ENCODE measurements at regions of chr5 and their contacts with region 1.

Region 1: GRCh38 chr5:141245250-141245717 is at the start of gene PCDHB15:
- DNase-seq: peak; percentile 85
- ATAC-seq: peak; percentile 87
- H3K4me3 Mint-ChIP-seq: peak within 1 kb of the TSS; percentile 85
- H3K27ac Mint-ChIP-seq: peak within 1 kb of the TSS; percentile 93
- H3K4me1 Mint-ChIP-seq: peaks cover 18% of the 10 kb centered on the region
- H3K27me3 Mint-ChIP-seq: no peaks in the 10 kb centered on the region
- CTCF ChIP-seq: peak; percentile 70
- total RNA-seq, gene PCDHB15: 7.7 to 8.7 TPM (median 8.4 TPM) in 3 replicates

Region 2: DNA sequence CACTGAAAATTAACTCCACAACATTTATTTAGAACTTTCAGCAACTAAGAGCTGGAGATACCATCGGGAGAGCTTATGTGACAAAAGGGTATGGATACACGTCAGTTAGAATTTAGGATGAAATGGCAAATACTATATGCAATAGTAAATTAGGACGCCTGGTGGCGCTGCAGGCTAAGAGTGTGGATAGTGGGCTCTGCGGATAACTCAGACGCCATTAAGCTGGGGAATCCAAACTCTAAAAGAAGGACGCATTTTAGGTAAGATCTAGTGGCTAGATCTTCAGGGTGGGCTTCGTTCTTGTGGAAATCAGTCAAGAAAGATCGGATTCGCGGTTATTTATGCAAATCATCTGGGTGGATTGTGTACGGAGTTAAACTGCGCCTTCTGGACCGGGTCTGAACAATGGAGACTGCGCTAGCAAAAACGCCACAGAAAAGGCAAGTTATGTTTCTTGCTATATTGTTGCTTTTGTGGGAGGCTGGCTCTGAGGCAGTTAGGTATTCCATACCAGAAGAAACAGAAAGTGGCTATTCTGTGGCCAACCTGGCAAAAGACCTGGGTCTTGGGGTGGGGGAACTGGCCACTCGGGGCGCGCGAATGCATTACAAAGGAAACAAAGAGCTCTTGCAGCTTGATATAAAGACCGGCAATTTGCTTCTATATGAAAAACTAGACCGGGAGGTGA is 110.1 kb before region 1 on chr5 and contains the start of gene PCDHB5:
- CTCF ChIA-PET with region 1: interaction called, 14 read pairs
- POLR2A ChIA-PET with region 1: no interaction called
- DNase-seq: peak; percentile 72
- ATAC-seq: peak; percentile 89
- H3K4me3 Mint-ChIP-seq: peak within 1 kb of the TSS; percentile 74
- H3K27ac Mint-ChIP-seq: peak within 1 kb of the TSS; percentile 64; the same call in 1 of the 2 replicates
- H3K4me1 Mint-ChIP-seq: peaks cover 4% of the 10 kb centered on the region; the same call in 1 of the 2 replicates
- H3K27me3 Mint-ChIP-seq: no peaks in the 10 kb centered on the region
- CTCF ChIP-seq: peak; percentile 72
- total RNA-seq, gene PCDHB5: 6.8 to 12.5 TPM (median 8.5 TPM) in 3 replicates

Region 3: GRCh38 chr5:141199359-141200235 is 45.7 kb before region 1 on chr5 and contains the start of gene PCDHB11:
- CTCF ChIA-PET with region 1: interaction called, 20 read pairs
- POLR2A ChIA-PET with region 1: no interaction called
- DNase-seq: no peak
- ATAC-seq: peak; percentile 67
- H3K4me3 Mint-ChIP-seq: peak within 1 kb of the TSS; percentile 24
- H3K27ac Mint-ChIP-seq: no peak within 1 kb of the TSS
- H3K4me1 Mint-ChIP-seq: peaks cover 7% of the 10 kb centered on the region
- H3K27me3 Mint-ChIP-seq: no peaks in the 10 kb centered on the region; the same call in 1 of the 2 replicates
- CTCF ChIP-seq: peak; percentile 32; the same call in 1 of the 2 replicates
- total RNA-seq, gene PCDHB11: 0.61 to 1.2 TPM (median 0.92 TPM) in 3 replicates

Region 4: GRCh38 chr5:141320225-141321169 is 75.2 kb after region 1 on chr5 and contains the start of gene TAF7:
- CTCF ChIA-PET with region 1: interaction called, 37 read pairs
- POLR2A ChIA-PET with region 1: interaction called, 5 read pairs
- DNase-seq: peak; percentile 95
- ATAC-seq: peak; percentile 94
- H3K4me3 Mint-ChIP-seq: peak within 1 kb of the TSS; percentile 99
- H3K27ac Mint-ChIP-seq: peak within 1 kb of the TSS; percentile 99
- H3K4me1 Mint-ChIP-seq: peaks cover 24% of the 10 kb centered on the region
- H3K27me3 Mint-ChIP-seq: peaks cover 24% of the 10 kb centered on the region
- CTCF ChIP-seq: peak; percentile 85
- total RNA-seq, gene TAF7: 87.8 to 96.2 TPM (median 90.1 TPM) in 3 replicates

Region 5: GRCh38 chr5:141369994-141370848 is 124.9 kb after region 1 on chr5 and contains the start of gene PCDHGB3:
- CTCF ChIA-PET with region 1: interaction called, 18 read pairs
- POLR2A ChIA-PET with region 1: no interaction called
- DNase-seq: peak; percentile 56
- ATAC-seq: peak; percentile 95
- H3K4me3 Mint-ChIP-seq: peak within 1 kb of the TSS; percentile 61
- H3K27ac Mint-ChIP-seq: peak within 1 kb of the TSS; percentile 91
- H3K4me1 Mint-ChIP-seq: peaks cover 5% of the 10 kb centered on the region
- H3K27me3 Mint-ChIP-seq: peaks cover 8% of the 10 kb centered on the region
- CTCF ChIP-seq: no peak
- total RNA-seq, gene PCDHGB3: 3.3 to 4.2 TPM (median 3.5 TPM) in 3 replicates

Region 6: DNA sequence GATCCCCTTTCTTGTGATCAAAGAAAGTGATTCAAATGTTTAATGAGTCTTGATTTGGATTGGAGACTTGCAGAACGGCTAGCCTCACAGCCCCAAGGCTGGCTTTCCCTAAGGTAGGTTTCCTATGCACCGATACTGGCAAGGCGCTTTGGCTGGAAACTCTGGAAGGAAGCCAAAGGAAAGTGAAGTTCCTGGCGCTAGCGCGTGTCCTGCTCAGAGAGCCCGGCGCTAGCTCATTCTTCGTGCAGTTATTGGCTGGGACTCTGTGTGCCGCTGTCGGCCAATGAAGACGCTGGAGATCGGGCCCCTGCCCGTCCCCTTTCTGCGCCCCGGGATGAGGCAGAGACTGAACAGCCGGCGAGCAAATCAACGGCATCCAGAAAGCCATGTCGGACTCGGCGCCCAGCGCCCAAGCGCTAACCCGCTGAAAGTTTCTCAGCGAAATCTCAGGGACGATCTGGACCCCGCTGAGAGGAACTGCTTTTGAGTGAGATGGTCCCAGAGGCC is 230.4 kb after region 1 on chr5 and contains the start of gene PCDHGC3:
- CTCF ChIA-PET with region 1: interaction called, 12 read pairs
- POLR2A ChIA-PET with region 1: no interaction called
- DNase-seq: peak; percentile 92
- ATAC-seq: peak; percentile 96
- H3K4me3 Mint-ChIP-seq: peak within 1 kb of the TSS; percentile 92
- H3K27ac Mint-ChIP-seq: peak within 1 kb of the TSS; percentile 93
- H3K4me1 Mint-ChIP-seq: peaks cover 35% of the 10 kb centered on the region
- H3K27me3 Mint-ChIP-seq: peaks cover 28% of the 10 kb centered on the region
- CTCF ChIP-seq: no peak
- total RNA-seq, gene PCDHGC3: 28.1 to 29.4 TPM (median 29.1 TPM) in 3 replicates

Region 7: DNA sequence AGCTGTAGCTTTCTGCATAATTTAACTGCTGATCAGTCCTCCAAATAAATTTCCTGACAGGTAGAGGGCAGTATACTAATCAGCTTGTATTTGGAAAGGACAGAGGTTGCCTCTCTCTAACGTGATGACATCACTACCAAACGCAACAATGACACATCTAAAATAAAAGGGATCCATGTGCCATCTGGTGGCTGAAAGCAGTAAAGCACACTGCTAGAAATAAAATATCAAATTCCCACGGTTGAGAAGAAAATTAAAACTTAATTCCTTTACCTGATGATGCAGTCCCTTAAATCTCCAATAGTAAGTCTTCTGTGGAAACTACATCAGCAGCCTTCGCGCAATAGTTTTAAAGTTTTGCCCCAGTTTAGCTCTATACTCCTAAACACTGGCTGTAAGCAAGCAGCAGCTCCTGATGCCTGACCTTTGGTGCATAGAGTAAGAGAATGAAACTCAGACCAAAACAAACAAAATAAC is 319.0 kb after region 1 on chr5:
- CTCF ChIA-PET with region 1: interaction called, 43 read pairs
- POLR2A ChIA-PET with region 1: interaction called, 3 read pairs
- DNase-seq: peak; percentile 48
- ATAC-seq: peak; percentile 56
- H3K4me3 Mint-ChIP-seq: no peak overlapping the region
- H3K27ac Mint-ChIP-seq: peak overlapping the region; percentile 94
- H3K4me1 Mint-ChIP-seq: peaks cover 35% of the 10 kb centered on the region
- H3K27me3 Mint-ChIP-seq: no peaks in the 10 kb centered on the region
- CTCF ChIP-seq: peak; percentile 94